ENCODE measurements at regions of chr5 and their contacts with region 1.

Region 1: GRCh38 chr5:72767289-72767998 is 49.0 kb upstream of the TNPO1 start:
- DNase-seq: no peak
- ATAC-seq: peak in 1 of 8 donors; percentile 33
- H3K4me3 ChIP-seq: no peak overlapping the region
- H3K27ac ChIP-seq: no peak overlapping the region
- H3K4me1 ChIP-seq: no peaks in the 10 kb centered on the region
- H3K27me3 ChIP-seq: no peaks in the 10 kb centered on the region
- CTCF ChIP-seq: no peak

Region 2: GRCh38 chr5:72692231-72692637 is 75.2 kb before region 1 on chr5:
- intact Hi-C with region 1: loop called in 1 of 10 experiments (anchors 10 kb)
- DNase-seq: no peak
- ATAC-seq: no peak
- H3K4me3 ChIP-seq: no peak overlapping the region
- H3K27ac ChIP-seq: no peak overlapping the region
- H3K4me1 ChIP-seq: no peaks in the 10 kb centered on the region
- H3K27me3 ChIP-seq: peaks cover 0 to 11% (median 5%) of the 10 kb centered on the region in 7 donors
- CTCF ChIP-seq: no peak

Region 3: GRCh38 chr5:72752909-72753308 is 14.5 kb before region 1 on chr5:
- intact Hi-C with region 1: loop called in 1 of 10 experiments (anchors 2 kb)
- DNase-seq: no peak
- ATAC-seq: no peak
- H3K4me3 ChIP-seq: no peak overlapping the region
- H3K27ac ChIP-seq: no peak overlapping the region
- H3K4me1 ChIP-seq: no peaks in the 10 kb centered on the region
- H3K27me3 ChIP-seq: no peaks in the 10 kb centered on the region
- CTCF ChIP-seq: no peak

Region 4: DNA sequence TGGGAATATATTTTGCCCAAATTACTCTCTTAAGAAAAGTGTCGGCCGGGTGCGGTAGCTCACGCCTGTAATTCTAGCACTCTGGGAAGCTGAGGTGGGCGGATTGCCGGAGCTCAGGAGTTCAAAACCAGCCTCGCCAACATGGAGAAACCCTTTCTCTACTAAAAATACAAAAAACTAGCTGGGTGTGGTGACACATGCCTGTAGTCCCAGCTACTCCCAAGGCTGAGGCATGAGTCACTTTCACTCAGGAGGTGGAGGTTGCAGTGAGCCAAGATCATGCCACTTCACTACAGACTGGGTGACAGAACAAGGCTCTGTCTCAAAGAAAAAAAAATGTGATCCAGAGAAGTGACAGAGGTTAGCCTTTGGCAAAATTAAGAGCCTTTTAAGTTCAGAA is 326.5 kb after region 1 on chr5:
- intact Hi-C with region 1: no loop called
- DNase-seq: no peak
- ATAC-seq: no peak
- H3K4me3 ChIP-seq: no peak overlapping the region
- H3K27ac ChIP-seq: no peak overlapping the region
- H3K4me1 ChIP-seq: no peaks in the 10 kb centered on the region
- H3K27me3 ChIP-seq: no peaks in the 10 kb centered on the region
- CTCF ChIP-seq: no peak

Measured in heart right ventricle (tissue), 16 donors.